Activated CD4-positive, alpha-beta T cell treated with anti-CD3 and anti-CD28 coated beads, Interleukin-2, amount 10 ng/mL, durations not matched to agents 24 days and 14 days (primary cell): ENCODE measurements at regions of chr7 and their contacts with region 1.

Region 1: DNA sequence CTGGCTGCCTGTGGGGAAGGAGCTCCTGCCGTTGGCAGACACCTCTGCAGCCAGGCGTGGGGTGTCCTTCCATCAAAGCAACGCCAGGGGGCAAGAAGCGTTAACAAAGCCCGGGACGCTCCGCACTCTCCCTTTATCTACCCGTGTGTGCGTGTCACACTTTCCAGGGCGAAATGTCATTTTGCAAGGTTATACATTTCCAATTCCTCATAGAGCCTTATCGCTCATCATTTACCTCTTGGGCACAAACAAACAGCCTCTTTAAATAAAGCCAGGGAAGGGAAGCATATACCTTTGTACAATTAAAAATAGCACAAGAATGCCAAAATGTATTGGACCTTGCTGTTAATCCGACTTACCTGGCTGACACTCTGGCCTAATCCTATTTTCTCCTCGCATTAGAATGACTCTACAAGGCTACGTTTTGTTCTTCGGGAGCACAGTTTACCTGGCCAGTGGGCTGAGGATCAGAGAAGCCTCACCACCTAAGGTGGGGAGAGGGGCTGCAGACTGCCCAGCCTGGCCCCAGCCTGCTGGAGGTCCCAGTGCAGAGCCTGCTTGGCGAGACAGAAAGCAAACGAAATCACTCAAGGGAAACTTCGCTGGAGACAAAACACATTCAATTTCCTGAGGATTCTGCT is 77.6 kb upstream of the EN2 start:
- DNase-seq: peak; percentile 88
- H3K4me3 Mint-ChIP-seq: no peak overlapping the region
- H3K27ac Mint-ChIP-seq: no peak overlapping the region
- H3K4me1 Mint-ChIP-seq: peaks cover 18% of the 10 kb centered on the region
- H3K27me3 Mint-ChIP-seq: peaks cover 75% of the 10 kb centered on the region

Region 2: DNA sequence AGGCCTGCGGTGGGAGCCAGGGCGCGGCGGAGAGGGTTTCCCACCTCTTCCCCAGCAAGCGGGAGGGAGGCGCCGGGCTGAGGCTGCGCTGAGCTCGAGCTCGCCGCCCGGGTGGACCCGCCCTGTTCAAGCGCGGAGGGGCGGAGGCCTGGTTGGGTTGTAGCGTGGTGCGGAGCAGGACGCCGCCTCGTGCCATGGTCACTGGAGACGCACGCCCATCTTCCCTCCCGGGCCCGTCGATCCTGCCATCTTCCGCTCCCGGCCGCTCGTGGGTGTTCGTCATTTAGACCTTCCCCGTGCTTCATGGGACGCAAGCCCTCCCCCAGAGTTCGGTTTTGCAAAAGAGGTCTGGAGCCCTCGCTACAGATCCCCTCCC is 68.3 kb after region 1 on chr7:
- intact Hi-C with region 1: loop called (anchors 2 kb)
- DNase-seq: no peak
- H3K4me3 Mint-ChIP-seq: no peak overlapping the region
- H3K27ac Mint-ChIP-seq: no peak overlapping the region
- H3K4me1 Mint-ChIP-seq: no peaks in the 10 kb centered on the region
- H3K27me3 Mint-ChIP-seq: peaks cover 68% of the 10 kb centered on the region

Region 3: DNA sequence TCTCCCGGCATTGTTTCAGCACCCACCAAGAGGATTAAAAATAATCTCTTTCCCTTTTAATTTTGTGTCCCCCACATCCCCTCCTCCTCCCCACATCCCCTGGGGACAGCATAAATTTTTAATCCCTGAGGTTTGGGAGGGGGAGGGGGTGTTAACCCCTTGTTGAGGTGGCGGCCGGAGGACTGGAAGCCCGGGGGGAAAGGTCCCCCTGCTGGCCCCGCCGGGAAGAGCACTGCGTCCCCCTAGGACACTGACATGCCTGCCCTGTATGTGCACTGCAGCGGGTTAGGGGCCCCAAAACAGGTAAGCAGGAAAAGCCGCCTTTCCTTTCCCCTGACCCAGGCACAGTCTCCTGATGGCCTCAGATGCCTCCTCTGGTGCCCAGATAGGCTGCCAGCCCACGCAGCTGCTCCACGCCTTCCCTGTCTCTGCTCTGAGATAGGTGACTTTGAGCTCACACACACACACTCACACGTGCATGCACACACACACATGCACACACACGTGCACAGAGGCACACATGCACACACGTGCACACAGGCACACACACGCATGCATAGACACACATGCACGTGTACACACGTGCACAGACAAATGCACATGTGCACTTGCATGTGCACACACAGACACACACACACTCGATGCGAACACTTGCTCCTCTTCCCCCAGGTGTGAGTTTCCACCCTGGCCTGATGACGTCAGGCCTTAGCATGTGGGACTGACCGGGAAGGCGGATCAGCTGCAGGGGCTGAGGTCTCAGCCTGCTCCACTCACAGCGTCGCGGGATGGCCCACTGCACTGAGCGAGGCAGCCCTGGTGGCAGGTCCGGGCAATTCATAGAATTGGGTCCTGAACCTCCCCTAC is 153.7 kb after region 1 on chr7:
- intact Hi-C with region 1: loop called (anchors 2 kb)
- DNase-seq: peak; percentile 72
- H3K4me3 Mint-ChIP-seq: no peak overlapping the region
- H3K27ac Mint-ChIP-seq: no peak overlapping the region
- H3K4me1 Mint-ChIP-seq: peaks cover 7% of the 10 kb centered on the region
- H3K27me3 Mint-ChIP-seq: peaks cover 69% of the 10 kb centered on the region

Region 4: GRCh38 chr7:157004050-157004838 is 1623.9 kb after region 1 on chr7:
- intact Hi-C with region 1: loop called (anchors 2 kb)
- DNase-seq: no peak
- H3K4me3 Mint-ChIP-seq: no peak overlapping the region
- H3K27ac Mint-ChIP-seq: peak overlapping the region; percentile 51
- H3K4me1 Mint-ChIP-seq: peaks cover 17% of the 10 kb centered on the region
- H3K27me3 Mint-ChIP-seq: peaks cover 66% of the 10 kb centered on the region

Region 5: DNA sequence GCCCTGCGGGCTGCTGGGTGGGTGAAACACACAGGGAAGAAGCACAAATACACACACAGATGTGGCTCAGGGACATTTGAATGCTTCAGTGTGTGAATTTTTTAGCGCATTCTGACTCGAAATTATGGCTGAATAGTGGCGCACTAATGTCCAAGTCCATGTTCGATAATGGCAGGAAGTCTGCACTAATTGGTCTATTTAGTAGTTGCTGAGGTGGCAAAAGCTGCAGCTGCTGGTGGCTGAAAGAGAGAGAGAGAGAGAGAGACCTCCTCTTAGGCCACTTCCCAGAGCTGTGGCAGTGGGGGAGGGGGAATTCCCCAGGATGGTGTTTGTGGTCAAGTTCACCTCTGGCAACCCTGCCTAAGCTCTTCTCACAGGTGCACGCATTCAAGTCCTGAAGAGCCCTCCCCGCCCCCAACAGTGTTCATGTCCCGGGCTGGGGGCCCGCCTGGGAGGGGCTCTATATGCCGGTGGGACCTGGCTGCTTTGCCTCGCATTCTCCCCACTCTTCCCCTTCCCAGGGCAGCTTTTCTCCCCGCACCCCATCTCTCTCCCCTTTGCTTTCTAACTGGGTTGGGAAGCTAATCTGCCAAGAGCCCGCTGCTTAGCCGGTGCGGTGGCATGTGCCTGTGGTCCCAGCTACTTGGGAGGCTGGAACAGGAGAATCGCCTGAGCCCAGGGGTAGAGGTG is 1636.2 kb after region 1 on chr7:
- intact Hi-C with region 1: loop called (anchors 2 kb)
- DNase-seq: peak; percentile 73
- H3K4me3 Mint-ChIP-seq: no peak overlapping the region
- H3K27ac Mint-ChIP-seq: no peak overlapping the region
- H3K4me1 Mint-ChIP-seq: peaks cover 16% of the 10 kb centered on the region
- H3K27me3 Mint-ChIP-seq: peaks cover 77% of the 10 kb centered on the region